ENCODE measurements at regions of chr17 and their contacts with region 1.

Region 1: DNA sequence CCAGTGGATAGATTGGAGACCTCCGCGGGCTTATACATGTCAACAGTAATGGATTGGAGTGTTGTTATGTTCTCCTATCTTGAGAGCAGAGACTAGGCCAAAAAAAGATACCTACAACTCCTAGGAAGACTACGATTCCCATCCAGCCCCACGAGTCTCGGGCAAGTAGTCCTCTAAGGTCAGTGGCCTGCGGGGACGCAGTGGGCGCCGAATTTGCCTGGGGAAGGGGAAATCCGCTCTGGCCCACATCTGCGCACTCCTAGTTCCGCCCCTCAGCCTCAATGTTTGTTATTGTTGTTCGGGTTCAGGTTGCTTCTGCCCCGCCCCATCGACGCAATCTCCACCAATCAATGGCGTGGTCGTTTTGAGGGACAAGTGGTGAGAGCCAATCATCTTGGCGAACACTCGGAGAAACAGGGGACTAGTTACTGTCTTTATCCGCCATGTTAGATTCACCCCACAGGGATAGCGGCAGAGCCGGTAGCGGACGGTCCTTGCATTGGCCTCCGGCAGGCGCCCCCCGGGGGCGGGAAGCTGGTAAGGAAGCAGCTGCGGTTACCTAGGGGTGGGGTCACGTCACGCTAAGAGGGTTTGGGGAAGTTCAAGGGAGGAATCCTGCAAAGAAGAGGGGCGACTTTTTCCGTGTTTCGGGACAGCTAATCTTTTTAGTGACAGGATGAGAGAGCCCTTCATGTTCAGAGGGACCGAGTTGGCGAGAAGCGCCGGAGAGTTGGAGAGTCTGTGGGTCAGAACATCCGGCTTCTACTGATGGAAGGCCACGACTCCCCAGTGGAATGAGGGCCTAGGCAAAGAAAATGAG is at the start of gene NBR1:
- DNase-seq: peak; percentile 97
- H3K4me3 ChIP-seq: peak within 1 kb of the TSS; percentile 75 to 86 (median 75)
- H3K27ac ChIP-seq: peak within 1 kb of the TSS; percentile 91
- H3K4me1 ChIP-seq: peaks cover 21% of the 10 kb centered on the region
- H3K27me3 ChIP-seq: no peaks in the 10 kb centered on the region
- CTCF ChIP-seq: no peak
- total RNA-seq, gene NBR1: 65.2 to 100 TPM

Region 2: GRCh38 chr17:43024407-43025289 is 146.3 kb before region 1 on chr17 and contains the start of gene RND2:
- CTCF ChIA-PET with region 1: interaction called, 3 read pairs
- dilution Hi-C with region 1: no loop called
- in situ Hi-C with region 1: no loop called
- intact Hi-C with region 1: loop called (anchors 1 kb)
- DNase-seq: peak; percentile 84
- H3K4me3 ChIP-seq: peak within 1 kb of the TSS; percentile 50 to 60 (median 52)
- H3K27ac ChIP-seq: peak within 1 kb of the TSS; percentile 47
- H3K4me1 ChIP-seq: peaks cover 15% of the 10 kb centered on the region
- H3K27me3 ChIP-seq: no peaks in the 10 kb centered on the region
- CTCF ChIP-seq: peak; percentile 62 to 87
- total RNA-seq, gene RND2: 0.17 to 0.85 TPM

Region 3: DNA sequence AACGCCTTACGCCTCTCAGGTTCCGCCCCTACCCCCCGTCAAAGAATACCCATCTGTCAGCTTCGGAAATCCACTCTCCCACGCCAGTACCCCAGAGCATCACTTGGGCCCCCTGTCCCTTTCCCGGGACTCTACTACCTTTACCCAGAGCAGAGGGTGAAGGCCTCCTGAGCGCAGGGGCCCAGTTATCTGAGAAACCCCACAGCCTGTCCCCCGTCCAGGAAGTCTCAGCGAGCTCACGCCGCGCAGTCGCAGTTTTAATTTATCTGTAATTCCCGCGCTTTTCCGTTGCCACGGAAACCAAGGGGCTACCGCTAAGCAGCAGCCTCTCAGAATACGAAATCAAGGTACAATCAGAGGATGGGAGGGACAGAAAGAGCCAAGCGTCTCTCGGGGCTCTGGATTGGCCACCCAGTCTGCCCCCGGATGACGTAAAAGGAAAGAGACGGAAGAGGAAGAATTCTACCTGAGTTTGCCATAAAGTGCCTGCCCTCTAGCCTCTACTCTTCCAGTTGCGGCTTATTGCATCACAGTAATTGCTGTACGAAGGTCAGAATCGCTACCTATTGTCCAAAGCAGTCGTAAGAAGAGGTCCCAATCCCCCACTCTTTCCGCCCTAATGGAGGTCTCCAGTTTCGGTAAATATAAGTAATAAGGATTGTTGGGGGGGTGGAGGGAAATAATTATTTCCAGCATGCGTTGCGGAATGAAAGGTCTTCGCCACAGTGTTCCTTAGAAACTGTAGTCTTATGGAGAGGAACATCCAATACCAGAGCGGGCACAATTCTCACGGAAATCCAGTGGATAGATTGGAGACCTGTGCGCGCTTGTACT is 45.6 kb before region 1 on chr17 and contains the start of gene BRCA1:
- CTCF ChIA-PET with region 1: interaction called, 5 read pairs
- dilution Hi-C with region 1: no loop called
- in situ Hi-C with region 1: no loop called
- intact Hi-C with region 1: loop called (anchors 1 kb)
- DNase-seq: peak; percentile 99
- H3K4me3 ChIP-seq: peak within 1 kb of the TSS; percentile 78 to 89 (median 80)
- H3K27ac ChIP-seq: peak within 1 kb of the TSS; percentile 92
- H3K4me1 ChIP-seq: peaks cover 22% of the 10 kb centered on the region
- H3K27me3 ChIP-seq: no peaks in the 10 kb centered on the region
- CTCF ChIP-seq: no peak
- total RNA-seq, gene BRCA1: 5.5 to 35.8 TPM

Region 4: DNA sequence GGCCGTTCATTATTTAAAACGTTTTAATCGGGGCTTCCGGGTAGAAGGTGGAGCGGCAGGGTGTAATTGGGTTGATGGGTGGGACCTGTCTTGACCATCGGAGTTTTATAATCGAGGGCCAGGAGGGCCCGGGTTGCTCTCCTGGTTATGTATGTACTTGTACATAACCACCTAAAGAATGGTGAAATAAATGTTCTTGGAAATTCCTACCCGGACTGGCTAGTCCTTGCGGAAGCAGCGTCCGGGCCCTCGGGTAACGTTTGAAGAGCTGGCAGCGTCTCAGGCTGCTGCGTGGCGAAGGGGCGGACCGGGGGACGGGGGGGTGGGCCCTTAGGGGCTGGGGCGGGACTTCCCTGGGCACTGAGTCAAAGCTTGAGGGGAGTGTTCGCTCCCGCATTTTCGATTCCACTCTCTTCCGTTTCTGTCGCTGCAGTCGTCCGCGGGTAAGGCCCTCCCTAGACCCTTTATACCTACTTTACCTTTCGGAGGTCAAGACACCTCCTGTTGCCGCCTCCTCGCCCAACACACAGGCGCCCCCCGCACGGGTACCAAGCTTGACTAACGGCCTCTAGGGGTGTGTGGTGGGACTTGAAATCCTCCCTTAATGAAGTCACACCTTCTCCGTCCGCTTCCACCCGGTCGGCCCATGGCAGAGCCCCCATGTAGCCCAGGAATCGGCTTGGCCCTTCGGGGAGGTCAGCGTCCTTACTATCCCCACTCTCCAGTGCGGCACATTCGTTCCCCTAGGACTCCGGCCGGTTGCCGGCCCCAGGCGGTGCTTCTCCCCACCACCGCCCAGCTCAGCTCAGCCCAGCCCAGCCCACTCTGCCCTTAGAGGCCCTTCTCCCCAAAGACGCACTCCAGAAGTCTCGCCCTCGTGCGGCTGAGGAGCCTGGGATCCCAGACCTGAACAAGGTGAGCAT is 40.8 kb after region 1 on chr17 and contains the start of gene TMEM106A:
- CTCF ChIA-PET with region 1: no interaction called
- dilution Hi-C with region 1: no loop called
- in situ Hi-C with region 1: no loop called
- intact Hi-C with region 1: loop called (anchors 2 kb)
- DNase-seq: peak; percentile 85
- H3K4me3 ChIP-seq: peak within 1 kb of the TSS; percentile 57 to 66 (median 61)
- H3K27ac ChIP-seq: peak within 1 kb of the TSS; percentile 64
- H3K4me1 ChIP-seq: peaks cover 17% of the 10 kb centered on the region
- H3K27me3 ChIP-seq: no peaks in the 10 kb centered on the region
- CTCF ChIP-seq: peak; percentile 10 to 38
- total RNA-seq, gene TMEM106A: 2.0 to 4.7 TPM

Region 5: DNA sequence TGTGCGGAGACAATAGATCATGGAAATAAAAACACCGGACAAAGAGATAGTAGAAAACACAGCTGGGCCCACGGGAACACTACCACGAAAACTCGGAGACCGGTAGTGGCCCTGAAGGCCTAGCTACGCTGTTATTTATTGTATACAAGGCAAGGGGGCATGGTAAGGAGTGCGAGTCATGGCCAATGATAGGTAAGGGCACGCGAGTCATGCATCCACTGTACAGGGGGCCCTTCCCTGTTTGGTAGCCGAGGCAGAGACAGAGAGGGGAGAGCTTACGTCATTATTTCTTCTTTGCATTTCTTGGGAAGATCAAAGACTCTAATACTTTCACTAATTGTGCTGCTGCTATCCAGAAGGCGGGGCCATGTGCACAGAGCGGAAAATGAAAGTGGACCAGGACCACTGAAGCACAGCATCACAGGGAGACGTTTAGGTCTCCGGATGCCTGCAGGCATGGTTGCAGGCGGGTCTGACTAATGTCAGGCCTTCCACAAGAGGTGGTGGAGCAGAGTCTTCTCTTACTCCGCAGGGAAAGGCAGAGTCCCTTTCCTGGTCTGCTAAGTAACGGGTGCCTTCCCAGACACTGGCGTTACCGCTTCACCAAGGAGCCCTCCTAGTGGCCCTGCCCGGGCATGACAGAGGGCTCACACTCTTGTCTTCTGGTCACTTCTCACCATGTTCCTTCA is 153.4 kb after region 1 on chr17:
- CTCF ChIA-PET with region 1: no interaction called
- dilution Hi-C with region 1: no loop called
- in situ Hi-C with region 1: loop called in 1 of 2 experiments (anchors 25 kb)
- intact Hi-C with region 1: no loop called
- DNase-seq: no peak
- H3K4me3 ChIP-seq: no peak overlapping the region
- H3K27ac ChIP-seq: no peak overlapping the region
- H3K4me1 ChIP-seq: peaks cover 7% of the 10 kb centered on the region
- H3K27me3 ChIP-seq: no peaks in the 10 kb centered on the region
- CTCF ChIP-seq: peak; percentile 11 to 54